Panc1 (cell line): ENCODE measurements at regions of chr1 and their contacts with region 1.

Region 1: DNA sequence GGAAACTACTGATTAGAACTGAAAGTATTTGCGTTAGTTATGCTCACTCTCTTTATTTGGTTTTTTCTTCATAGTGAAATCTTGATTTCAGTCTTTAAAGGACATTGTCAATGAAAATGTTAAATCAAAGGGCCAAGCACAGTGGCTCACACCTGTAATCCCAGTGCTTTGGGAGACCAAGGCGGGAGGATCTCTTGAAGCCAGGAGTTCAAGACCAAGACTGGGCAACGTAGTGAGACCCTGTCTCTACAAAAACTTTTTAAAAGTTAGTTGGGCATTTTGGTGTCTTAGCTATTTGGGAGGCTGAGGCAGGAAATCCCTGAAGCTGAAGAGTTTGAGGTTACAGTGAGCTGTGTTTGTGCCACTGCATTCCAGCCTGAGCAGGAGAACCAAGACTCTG is 13.6 kb downstream of the RLF start:
- DNase-seq: no peak
- ATAC-seq: no peak
- H3K4me3 ChIP-seq: no peak overlapping the region
- H3K27ac ChIP-seq: no peak overlapping the region
- H3K4me1 ChIP-seq: no peaks in the 10 kb centered on the region
- H3K27me3 ChIP-seq: no peaks in the 10 kb centered on the region
- CTCF ChIP-seq: no peak

Region 2: GRCh38 chr1:39501666-39502065 is 673.1 kb before region 1 on chr1:
- CTCF ChIA-PET with region 1: no interaction called
- POLR2A ChIA-PET with region 1: no interaction called
- in situ Hi-C with region 1: no loop called
- intact Hi-C with region 1: no loop called
- DNase-seq: no peak
- ATAC-seq: no peak
- H3K4me3 ChIP-seq: no peak overlapping the region
- H3K27ac ChIP-seq: no peak overlapping the region
- H3K4me1 ChIP-seq: no peaks in the 10 kb centered on the region
- H3K27me3 ChIP-seq: no peaks in the 10 kb centered on the region
- CTCF ChIP-seq: no peak

Region 3: GRCh38 chr1:39995973-39996393 is 178.8 kb before region 1 on chr1:
- CTCF ChIA-PET with region 1: no interaction called
- POLR2A ChIA-PET with region 1: no interaction called
- in situ Hi-C with region 1: no loop called
- intact Hi-C with region 1: no loop called
- DNase-seq: no peak
- ATAC-seq: no peak
- H3K4me3 ChIP-seq: no peak overlapping the region
- H3K27ac ChIP-seq: no peak overlapping the region
- H3K4me1 ChIP-seq: no peaks in the 10 kb centered on the region
- H3K27me3 ChIP-seq: no peaks in the 10 kb centered on the region
- CTCF ChIP-seq: no peak

Region 4: DNA sequence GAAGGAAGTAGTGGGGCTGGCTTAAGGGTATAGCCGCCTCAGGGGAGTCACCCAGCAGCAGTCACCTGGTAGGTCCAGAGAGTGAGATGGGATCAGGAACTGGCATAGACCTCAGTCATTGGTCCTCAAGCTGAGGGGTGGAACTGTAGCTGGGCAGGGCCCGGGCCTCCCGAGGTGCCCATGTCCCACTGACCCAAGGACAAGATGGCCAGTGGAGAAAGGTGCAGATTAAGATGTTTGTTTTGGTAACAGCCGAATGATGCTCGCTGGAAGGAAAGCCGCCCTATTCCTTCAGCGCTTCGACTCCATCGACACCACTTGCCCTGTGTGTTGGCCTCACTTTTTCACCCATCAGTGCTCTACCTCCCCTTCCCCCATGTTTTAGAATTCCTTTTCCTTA is 125.9 kb after region 1 on chr1:
- CTCF ChIA-PET with region 1: no interaction called
- POLR2A ChIA-PET with region 1: interaction called, 10 read pairs
- in situ Hi-C with region 1: no loop called
- intact Hi-C with region 1: no loop called
- DNase-seq: no peak
- ATAC-seq: no peak
- H3K4me3 ChIP-seq: no peak overlapping the region
- H3K27ac ChIP-seq: no peak overlapping the region
- H3K4me1 ChIP-seq: no peaks in the 10 kb centered on the region
- H3K27me3 ChIP-seq: no peaks in the 10 kb centered on the region
- CTCF ChIP-seq: no peak